ENCODE measurements at regions of chr10 and their contacts with region 1.

Region 1: GRCh38 chr10:103333925-103334520 is 16.9 kb downstream of the PCGF6 start:
- DNase-seq: peak; percentile 32
- ATAC-seq: no peak
- H3K4me3 ChIP-seq: no peak overlapping the region
- H3K27ac ChIP-seq: no peak overlapping the region
- H3K4me1 ChIP-seq: no peaks in the 10 kb centered on the region
- H3K27me3 ChIP-seq: no peaks in the 10 kb centered on the region
- CTCF ChIP-seq: peak; percentile 68 to 90 (median 77)
- POLR2A ChIP-seq: no peak
- RAD21 ChIP-seq: peak; percentile 84

Region 2: DNA sequence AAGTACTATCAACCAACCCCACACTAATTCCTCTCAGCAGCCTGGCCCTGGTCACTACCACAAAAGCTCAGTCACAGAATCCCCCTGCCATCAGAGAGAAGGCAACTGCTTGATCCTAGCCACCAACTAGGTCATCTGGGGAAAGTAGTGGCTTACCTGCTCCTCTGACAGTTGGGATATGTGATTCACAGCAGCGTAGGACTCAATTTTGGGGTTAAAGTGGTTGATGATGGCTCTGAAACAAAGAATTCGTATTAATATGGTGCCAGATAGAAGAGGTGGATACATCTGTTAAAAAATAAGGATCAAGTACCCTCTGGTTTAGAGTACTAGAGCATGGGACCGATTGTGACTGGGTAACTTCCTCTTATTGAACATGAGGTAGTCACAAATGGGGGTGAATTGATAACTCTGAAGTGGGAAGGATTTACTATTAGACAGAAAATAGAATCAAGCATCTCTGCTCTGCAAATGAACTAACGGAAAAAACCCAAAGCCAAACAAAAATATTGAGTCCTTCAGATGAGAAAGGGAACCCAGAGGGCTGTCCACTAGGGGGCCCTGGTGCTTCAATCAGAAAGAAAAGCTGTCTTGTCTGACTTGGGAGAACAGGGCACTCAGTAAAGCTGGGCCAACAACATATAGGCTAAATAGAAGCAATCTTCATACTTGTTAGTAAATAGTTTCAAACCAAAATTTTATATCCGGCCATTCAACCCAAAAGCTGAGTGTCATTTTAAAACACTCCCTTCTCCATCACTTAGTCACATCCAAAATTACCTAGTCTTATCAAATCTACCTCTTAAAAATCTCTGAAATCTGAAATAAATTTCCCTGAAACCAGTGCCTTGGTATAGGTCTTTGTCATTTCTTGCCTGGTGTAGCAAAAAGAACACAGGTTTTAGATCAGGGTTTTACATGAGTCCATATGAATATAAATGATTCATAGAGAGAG is 1444.5 kb before region 1 on chr10:
- CTCF ChIA-PET with region 1: no interaction called
- POLR2A ChIA-PET with region 1: no interaction called
- RAD21 ChIA-PET with region 1: no interaction called
- intact Hi-C with region 1: no loop called
- DNase-seq: peak; percentile 69
- ATAC-seq: peak; percentile 90
- H3K4me3 ChIP-seq: no peak overlapping the region
- H3K27ac ChIP-seq: no peak overlapping the region
- H3K4me1 ChIP-seq: peaks cover 4 to 18% of the 10 kb centered on the region in 2 experiments; a peak in 3 of 4 replicates
- H3K27me3 ChIP-seq: no peaks in the 10 kb centered on the region
- CTCF ChIP-seq: peak; percentile 93 to 99 (median 99)
- POLR2A ChIP-seq: no peak
- RAD21 ChIP-seq: peak; percentile 96

Region 3: DNA sequence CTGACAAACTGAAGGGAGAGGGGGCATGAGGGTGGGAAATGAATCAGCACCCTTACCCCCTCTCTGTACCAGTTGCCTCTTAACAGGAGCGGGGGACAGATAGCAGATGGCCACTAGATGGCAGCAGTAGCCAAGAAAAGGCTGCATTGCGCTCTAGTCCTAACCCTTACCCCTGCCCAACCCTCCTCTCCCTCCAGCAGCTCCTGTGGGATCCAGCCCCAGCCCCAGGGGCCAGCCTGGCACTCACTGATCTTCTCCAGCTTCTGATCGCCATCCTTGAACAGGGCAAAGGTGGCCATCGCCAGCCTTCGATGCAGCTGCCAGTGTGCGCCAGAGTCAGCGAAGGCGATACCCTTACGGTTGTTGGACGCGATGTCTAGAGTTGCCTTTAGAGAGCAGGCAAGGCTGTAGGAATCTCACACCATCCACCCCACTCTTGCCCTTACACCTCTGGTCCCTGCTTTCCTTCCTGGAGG is 499.0 kb before region 1 on chr10:
- CTCF ChIA-PET with region 1: interaction called, 4 read pairs
- POLR2A ChIA-PET with region 1: no interaction called
- RAD21 ChIA-PET with region 1: no interaction called
- intact Hi-C with region 1: loop called (anchors 2 kb)
- DNase-seq: peak; percentile 77
- ATAC-seq: peak; percentile 100
- H3K4me3 ChIP-seq: no peak overlapping the region
- H3K27ac ChIP-seq: no peak overlapping the region
- H3K4me1 ChIP-seq: no peaks in the 10 kb centered on the region; a peak in 1 of 4 replicates
- H3K27me3 ChIP-seq: no peaks in the 10 kb centered on the region; the same call in 1 of the 2 replicates
- CTCF ChIP-seq: peak; percentile 92 to 99 (median 93)
- POLR2A ChIP-seq: no peak
- RAD21 ChIP-seq: peak; percentile 98

Region 4: GRCh38 chr10:103102195-103102594 is 231.8 kb before region 1 on chr10:
- CTCF ChIA-PET with region 1: no interaction called
- POLR2A ChIA-PET with region 1: no interaction called
- RAD21 ChIA-PET with region 1: no interaction called
- intact Hi-C with region 1: loop called (anchors 5 kb)
- DNase-seq: no peak
- ATAC-seq: no peak
- H3K4me3 ChIP-seq: no peak overlapping the region
- H3K27ac ChIP-seq: no peak overlapping the region
- H3K4me1 ChIP-seq: no peaks in the 10 kb centered on the region
- H3K27me3 ChIP-seq: no peaks in the 10 kb centered on the region
- CTCF ChIP-seq: no peak
- POLR2A ChIP-seq: no peak
- RAD21 ChIP-seq: no peak

Region 5: GRCh38 chr10:103759100-103759781 is 425.2 kb after region 1 on chr10:
- CTCF ChIA-PET with region 1: no interaction called
- POLR2A ChIA-PET with region 1: no interaction called
- RAD21 ChIA-PET with region 1: no interaction called
- intact Hi-C with region 1: no loop called
- DNase-seq: no peak
- ATAC-seq: no peak
- H3K4me3 ChIP-seq: no peak overlapping the region
- H3K27ac ChIP-seq: no peak overlapping the region
- H3K4me1 ChIP-seq: peaks cover 12 to 55% of the 10 kb centered on the region in 2 experiments
- H3K27me3 ChIP-seq: no peaks in the 10 kb centered on the region
- CTCF ChIP-seq: no peak
- POLR2A ChIP-seq: no peak
- RAD21 ChIP-seq: no peak

Measured in HCT116 (cell line).